ENCODE measurements at regions of chrX and their contacts with region 1.

Region 1: GRCh38 chrX:150032741-150033140 is 94.5 kb upstream of the EOLA2 start:
- DNase-seq: no peak
- ATAC-seq: no peak

Region 2: DNA sequence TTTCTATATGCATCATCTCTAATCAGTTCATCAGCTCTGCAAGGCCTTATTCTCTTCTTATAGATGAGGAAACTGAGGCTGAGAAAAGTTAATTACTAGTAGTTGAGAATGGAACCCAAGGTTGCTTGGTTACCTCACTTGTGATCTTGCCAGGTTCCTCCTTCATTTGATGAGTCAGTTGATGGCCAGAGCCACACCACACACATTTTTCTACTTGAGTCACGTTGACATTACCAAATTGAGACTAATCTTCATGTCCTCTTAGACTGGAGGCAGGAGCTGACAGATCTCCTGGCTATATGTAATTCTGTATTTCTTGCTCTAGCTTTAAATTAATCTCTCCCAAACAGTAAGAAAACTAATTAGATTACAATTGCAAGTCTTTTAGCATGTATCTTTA is 1103.9 kb before region 1 on chrX:
- intact Hi-C with region 1: no loop called
- DNase-seq: no peak
- ATAC-seq: no peak

Region 3: DNA sequence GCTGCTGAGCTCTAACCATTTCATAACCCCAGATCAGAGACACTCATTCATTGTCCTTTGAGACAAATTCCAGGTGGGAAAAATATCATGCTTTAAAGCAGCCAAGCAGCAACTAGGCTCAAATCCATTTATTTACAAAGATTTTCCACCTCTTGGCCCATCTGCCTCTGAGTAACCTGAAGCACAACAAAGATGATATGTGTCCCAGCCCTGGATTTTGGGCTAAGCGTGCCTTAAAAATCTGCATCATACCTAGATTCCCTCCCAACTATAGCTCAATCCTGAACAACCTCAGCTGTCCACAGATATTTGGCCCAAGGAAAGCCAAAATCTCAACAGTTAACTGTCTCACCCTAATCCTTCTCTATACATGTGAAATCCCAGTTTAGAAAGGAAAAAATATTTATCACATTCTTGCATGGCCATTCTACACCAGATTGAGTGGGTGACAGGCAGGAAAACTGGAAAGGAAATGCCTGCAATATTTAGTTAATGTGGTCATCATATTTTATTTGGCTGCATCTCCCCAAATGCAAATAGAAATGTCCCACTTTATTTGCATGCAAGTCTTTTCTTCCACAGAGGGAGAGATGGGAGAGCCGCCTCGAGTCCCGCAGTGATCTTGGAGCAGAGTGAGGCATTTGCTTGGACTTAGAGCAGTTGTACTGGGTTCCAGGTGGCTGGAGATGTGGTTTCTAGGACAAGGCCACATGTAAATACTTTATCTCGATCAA is 51.9 kb after region 1 on chrX:
- intact Hi-C with region 1: loop called (anchors 10 kb)
- DNase-seq: no peak
- ATAC-seq: no peak

Region 4: GRCh38 chrX:150348365-150348764 is 315.6 kb after region 1 on chrX:
- intact Hi-C with region 1: no loop called
- DNase-seq: no peak
- ATAC-seq: no peak